AG04450 (cell line): ENCODE measurements at regions of chr5 and their contacts with region 1.

Region 1: GRCh38 chr5:147576646-147577535 is 67.0 kb upstream of the DPYSL3 start:
- DNase-seq: no peak
- H3K4me3 ChIP-seq: no peak overlapping the region
- H3K27ac ChIP-seq: no peak overlapping the region
- H3K27me3 ChIP-seq: peaks cover 2% of the 10 kb centered on the region
- CTCF ChIP-seq: peak; percentile 98

Region 2: DNA sequence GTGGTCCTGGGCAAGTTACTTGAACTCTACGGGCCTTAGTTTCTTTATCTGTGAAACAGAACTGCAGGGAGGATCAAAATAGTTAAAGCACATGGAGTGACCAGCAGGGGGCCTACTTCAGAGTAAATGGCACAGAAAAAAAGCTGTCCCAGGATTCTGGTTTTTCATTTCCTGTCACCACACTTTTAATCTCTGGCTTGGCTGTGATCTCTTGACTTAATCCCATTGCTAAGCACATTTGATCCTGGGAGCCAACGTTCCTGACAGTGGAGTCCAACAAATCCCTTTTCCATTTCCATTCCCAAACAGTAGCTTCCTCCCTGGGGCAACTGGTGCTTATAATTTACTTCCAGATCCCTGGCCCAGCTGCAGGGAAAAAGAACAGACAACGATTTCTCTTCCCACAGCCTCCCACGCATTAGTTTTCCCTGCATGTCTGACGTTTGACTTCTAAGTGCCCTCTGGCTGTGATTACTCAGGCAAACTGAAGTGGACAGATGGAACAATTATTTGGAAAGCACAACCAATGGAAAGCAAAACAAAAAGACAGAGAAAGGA is 478.6 kb before region 1 on chr5:
- CTCF ChIA-PET with region 1: interaction called, 46 read pairs
- POLR2A ChIA-PET with region 1: no interaction called
- DNase-seq: no peak
- H3K4me3 ChIP-seq: no peak overlapping the region
- H3K27ac ChIP-seq: no peak overlapping the region
- H3K27me3 ChIP-seq: no peaks in the 10 kb centered on the region
- CTCF ChIP-seq: peak; percentile 57

Region 3: DNA sequence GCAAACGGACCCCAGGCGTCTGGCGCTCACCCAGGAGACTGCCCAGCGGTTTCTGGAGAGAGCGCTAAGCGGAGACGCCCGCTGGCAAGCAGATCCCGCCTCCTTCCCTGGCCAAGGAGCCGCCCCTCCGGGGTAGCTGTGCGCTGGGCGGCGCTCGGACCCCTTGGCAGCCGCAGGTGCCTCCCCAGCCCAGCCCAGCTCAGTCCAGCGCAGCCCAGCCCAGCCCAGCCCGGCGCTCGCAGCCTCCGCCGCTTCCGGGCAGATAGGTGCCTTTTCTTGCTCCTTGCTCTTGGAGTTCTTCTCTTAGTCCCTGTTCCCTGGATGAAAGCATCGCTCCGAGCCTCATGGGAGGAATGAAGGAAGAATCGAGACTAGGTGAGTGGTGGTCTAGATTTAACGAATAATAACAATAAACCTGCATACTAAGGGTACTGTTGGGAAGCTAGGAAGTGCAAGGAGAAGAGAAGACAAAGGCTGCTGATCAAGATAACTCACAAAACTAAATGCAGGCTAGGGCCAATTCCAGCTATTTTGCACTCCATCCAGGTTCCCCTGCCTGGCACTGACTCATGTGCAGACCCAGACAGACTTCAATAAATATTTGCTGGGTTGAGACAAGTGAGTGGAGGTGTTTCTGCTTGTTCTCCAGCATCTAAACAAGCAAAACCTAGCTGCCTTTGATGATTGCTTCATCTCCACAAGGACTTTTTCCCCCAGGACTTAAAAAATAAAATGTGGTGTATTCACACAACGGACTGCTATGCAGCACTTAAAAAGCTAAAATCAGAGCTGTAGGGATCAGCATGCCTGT is 341.9 kb before region 1 on chr5 and contains the start of gene STK32A:
- CTCF ChIA-PET with region 1: interaction called, 10 read pairs
- POLR2A ChIA-PET with region 1: no interaction called
- DNase-seq: no peak
- H3K4me3 ChIP-seq: peak within 1 kb of the TSS; percentile 52
- H3K27ac ChIP-seq: no peak within 1 kb of the TSS
- H3K27me3 ChIP-seq: peaks cover 12% of the 10 kb centered on the region
- CTCF ChIP-seq: no peak
- polyA plus RNA-seq, gene STK32A: 0.12 and 0.20 TPM in 2 replicates

Region 4: GRCh38 chr5:147391781-147392180 is 185.1 kb before region 1 on chr5:
- CTCF ChIA-PET with region 1: interaction called, 81 read pairs
- POLR2A ChIA-PET with region 1: no interaction called
- DNase-seq: peak; percentile 27
- H3K4me3 ChIP-seq: no peak overlapping the region
- H3K27ac ChIP-seq: no peak overlapping the region
- H3K27me3 ChIP-seq: no peaks in the 10 kb centered on the region
- CTCF ChIP-seq: peak; percentile 70

Region 5: DNA sequence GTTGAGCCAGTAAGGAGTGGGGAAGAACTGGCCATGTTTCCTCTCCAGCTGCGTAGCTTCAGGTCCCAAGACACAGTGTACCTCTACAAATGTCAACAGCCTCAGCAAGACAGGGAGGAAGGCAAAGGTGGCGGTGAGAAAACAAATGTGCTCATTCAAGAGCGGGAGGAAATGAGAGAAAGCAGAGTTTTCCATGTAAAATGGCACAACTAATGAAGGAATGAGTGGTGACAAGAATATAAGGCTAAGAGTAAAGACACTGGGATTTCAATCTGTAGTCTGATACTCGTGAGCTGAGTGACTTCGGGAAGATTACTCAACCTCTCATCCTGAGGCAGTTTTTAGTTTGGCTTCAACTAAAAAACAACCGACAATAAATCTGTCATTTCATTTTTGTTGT is 134.7 kb before region 1 on chr5:
- CTCF ChIA-PET with region 1: interaction called, 14 read pairs
- POLR2A ChIA-PET with region 1: no interaction called
- DNase-seq: no peak
- H3K4me3 ChIP-seq: no peak overlapping the region
- H3K27ac ChIP-seq: no peak overlapping the region
- H3K27me3 ChIP-seq: no peaks in the 10 kb centered on the region
- CTCF ChIP-seq: no peak

Region 6: DNA sequence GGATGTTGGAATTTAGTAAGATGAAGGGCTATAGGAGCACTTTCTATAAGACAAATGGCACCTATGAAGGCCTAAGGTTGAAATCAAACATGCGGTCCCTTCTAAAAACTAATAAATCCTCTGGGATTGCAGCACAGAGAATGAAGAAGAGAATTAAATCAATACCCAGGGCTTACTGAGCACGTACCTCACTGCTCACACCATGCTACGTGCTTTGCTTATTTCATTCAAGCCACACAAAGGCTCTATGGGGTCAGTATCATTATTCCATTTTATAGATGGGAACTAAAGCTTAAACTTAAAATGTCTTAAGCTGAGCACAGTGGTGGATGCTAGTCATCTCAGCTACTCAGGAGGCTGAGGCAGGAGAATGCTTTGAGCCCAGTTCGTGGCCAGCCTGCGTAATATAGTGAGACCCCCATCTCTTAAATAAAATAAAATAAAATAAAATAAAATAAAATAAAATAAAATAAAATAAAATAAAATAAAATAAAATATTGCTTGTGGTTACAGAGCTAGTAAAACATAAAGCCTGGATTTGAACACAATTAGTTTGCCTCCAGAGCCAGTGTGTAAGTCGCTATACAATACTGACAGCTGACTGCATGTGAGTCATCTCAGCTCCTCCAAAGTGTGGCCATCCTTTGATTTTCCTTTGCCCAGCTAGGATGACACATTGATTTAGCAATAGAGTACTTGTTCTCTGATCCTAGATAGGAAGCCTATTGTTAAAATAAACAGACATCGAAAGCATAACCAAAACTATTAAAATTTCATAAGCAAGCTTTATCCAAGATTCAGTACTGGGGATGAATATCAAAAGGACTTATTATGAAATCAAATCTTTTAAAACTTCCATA is 46.1 kb before region 1 on chr5:
- CTCF ChIA-PET with region 1: interaction called, 13 read pairs
- POLR2A ChIA-PET with region 1: no interaction called
- DNase-seq: peak; percentile 51
- H3K4me3 ChIP-seq: no peak overlapping the region
- H3K27ac ChIP-seq: no peak overlapping the region
- H3K27me3 ChIP-seq: no peaks in the 10 kb centered on the region
- CTCF ChIP-seq: no peak